HAP-1 (cell line): ENCODE measurements at regions of chr3 and their contacts with region 1.

Region 1: GRCh38 chr3:119676771-119677640 is at the start of gene COX17:
- DNase-seq: peak; percentile 94
- H3K4me3 ChIP-seq: peak within 1 kb of the TSS; percentile 56
- H3K4me1 ChIP-seq: peaks cover 5% of the 10 kb centered on the region; the same call in 1 of the 2 replicates
- H3K27me3 ChIP-seq: no peaks in the 10 kb centered on the region

Region 2: DNA sequence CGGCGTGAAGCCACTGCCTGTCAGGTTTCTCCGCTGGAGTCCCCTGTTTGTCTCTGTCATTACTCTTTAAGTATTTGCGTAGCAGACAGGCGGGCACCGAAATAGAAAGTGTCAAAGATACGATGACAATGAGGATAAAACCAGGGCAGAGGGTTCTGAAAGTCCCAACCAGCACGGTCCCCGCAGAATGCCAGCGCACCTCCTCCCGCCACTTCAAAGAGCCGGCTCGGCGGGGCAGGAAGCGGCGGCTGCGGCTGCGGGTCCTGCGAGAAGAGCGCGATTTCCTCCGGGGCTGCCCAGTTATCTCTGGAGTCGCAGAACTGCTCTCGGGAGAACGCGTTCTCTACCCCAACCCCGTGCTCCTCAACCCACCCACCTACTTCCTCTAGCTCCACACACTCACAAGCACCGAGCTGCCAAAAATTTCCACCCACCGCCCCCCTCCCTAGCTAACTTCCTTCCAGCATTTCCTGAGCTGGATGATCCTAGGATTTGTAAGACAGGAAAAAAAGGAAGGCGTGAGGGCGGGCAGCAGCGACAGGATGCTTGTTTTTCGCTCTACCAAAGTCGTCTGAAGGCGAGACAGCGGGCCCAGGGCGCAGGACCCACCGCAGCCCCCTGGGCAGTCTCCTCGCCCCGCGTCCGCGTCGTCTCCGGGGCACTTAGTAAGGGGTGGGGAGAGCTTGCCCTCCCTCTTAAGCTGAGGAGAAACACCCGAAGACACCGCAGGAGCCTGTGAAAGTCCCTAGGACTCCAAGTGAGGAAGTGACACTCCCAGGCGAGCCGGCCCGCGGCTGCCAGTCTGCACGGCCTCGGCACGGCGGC is 382.9 kb before region 1 on chr3 and contains the start of gene ARHGAP31:
- in situ Hi-C with region 1: loop called (anchors 25 kb)
- DNase-seq: peak; percentile 51 to 74
- H3K4me3 ChIP-seq: peak within 1 kb of the TSS; percentile 37
- H3K4me1 ChIP-seq: peaks cover 33% of the 10 kb centered on the region
- H3K27me3 ChIP-seq: no peaks in the 10 kb centered on the region

Region 3: GRCh38 chr3:119498186-119498987 is 178.6 kb before region 1 on chr3 and contains the start of gene TIMMDC1:
- in situ Hi-C with region 1: loop called (anchors 25 kb)
- DNase-seq: peak; percentile 95 to 97
- H3K4me3 ChIP-seq: peak within 1 kb of the TSS; percentile 85
- H3K4me1 ChIP-seq: peaks cover 12% of the 10 kb centered on the region
- H3K27me3 ChIP-seq: no peaks in the 10 kb centered on the region

Region 4: DNA sequence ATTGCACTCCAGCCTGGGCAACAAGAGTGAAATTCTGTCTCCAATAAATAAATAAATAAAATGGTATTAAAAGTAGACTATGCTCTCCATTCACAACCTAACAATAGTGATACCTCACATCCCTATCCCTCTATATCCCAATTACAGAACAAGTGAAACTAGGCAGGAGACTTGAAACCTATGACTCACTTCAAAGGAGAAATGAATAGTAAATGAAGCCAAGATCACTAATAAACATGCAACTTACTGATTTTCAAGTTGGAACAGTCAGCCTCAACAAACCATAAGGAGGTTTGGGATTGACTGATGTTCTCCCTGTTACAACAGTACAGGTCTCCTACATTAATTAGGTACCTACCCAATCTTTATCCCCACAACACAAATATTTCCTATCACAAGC is 313.9 kb after region 1 on chr3:
- in situ Hi-C with region 1: no loop called
- DNase-seq: no peak
- H3K4me3 ChIP-seq: no peak overlapping the region
- H3K4me1 ChIP-seq: peaks cover 3% of the 10 kb centered on the region; the same call in 1 of the 2 replicates
- H3K27me3 ChIP-seq: no peaks in the 10 kb centered on the region

Region 5: GRCh38 chr3:120113128-120114116 is 436.4 kb after region 1 on chr3:
- in situ Hi-C with region 1: no loop called
- DNase-seq: no peak
- H3K4me3 ChIP-seq: no peak overlapping the region
- H3K4me1 ChIP-seq: no peaks in the 10 kb centered on the region
- H3K27me3 ChIP-seq: no peaks in the 10 kb centered on the region